Sigmoid colon (tissue), 7 donors: ENCODE measurements at regions of chrX and their contacts with region 1.

Region 1: DNA sequence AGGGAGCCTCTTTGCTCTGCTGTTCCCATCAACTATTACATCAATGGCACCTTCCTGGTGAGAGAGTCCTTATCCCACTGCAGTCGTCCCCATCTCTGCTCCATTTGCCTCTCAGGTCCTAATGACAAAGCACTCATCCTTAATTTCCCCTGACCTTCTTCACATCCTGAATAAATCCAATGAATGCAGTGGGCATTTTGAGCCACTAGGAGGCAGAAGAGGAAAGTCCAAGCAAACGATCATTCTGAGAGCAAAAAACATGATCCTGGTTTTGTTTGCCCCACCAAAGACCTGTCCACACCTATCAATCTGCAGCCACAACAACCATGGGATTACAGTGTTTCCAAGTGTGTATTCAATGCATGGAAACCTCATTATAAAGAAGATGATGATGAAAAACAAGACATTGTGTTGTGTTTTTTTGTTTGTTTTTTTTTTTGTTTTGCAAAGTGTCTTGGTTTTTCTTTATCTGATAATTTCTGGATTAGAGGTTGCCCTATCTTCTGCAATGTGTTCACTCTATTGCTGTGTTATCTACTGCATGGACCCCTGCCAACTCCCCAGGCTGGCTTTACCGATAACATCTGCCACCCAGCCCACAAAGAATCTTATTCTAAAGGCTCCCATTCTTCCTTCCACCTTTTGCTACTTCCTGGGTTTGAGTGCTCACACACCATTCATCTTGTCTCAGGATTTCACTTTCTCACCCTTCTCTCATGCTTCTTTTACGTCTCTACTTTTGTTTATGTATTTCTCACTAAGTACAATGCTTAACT is 207.2 kb downstream of the NLGN4X start:
- DNase-seq: no peak
- H3K4me3 ChIP-seq: no peak overlapping the region
- H3K27ac ChIP-seq: no peak overlapping the region
- H3K4me1 ChIP-seq: no peaks in the 10 kb centered on the region
- H3K27me3 ChIP-seq: no peaks in the 10 kb centered on the region
- CTCF ChIP-seq: peak in 3 of 4 experiments; percentile 6 to 32 (median 30)
- EP300 ChIP-seq: no peak
- POLR2A ChIP-seq: no peak

Region 2: DNA sequence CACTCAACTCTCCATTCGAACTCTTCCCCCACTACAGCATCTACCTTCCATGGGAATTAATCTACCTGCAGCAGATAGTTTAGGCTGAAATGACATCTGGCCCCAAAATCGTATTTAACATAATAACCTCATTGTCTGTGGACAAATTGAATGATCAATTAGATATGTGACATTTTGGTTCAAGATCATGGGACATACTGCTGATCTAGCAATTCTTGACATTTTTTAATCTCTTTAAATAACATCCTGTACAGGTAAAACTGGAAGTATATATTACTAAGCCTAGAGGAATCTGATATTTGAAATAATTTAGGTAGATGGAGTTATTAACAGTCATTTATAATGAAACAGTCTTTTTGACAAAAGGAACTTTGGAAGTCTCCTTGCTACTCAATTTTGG is 495.3 kb before region 1 on chrX:
- intact Hi-C with region 1: no loop called
- DNase-seq: no peak
- H3K4me3 ChIP-seq: no peak overlapping the region
- H3K27ac ChIP-seq: no peak overlapping the region
- H3K4me1 ChIP-seq: no peaks in the 10 kb centered on the region
- H3K27me3 ChIP-seq: no peaks in the 10 kb centered on the region
- CTCF ChIP-seq: no peak
- EP300 ChIP-seq: no peak
- POLR2A ChIP-seq: no peak

Region 3: GRCh38 chrX:6225911-6226595 is 204.5 kb after region 1 on chrX:
- intact Hi-C with region 1: loop called (anchors 10 kb)
- DNase-seq: no peak
- H3K4me3 ChIP-seq: peak overlapping the region; percentile 21 to 42 (median 36)
- H3K27ac ChIP-seq: peak overlapping the region in 1 of 4 donors; percentile 28
- H3K4me1 ChIP-seq: peaks cover 0 to 19% (median 12%) of the 10 kb centered on the region in 4 donors
- H3K27me3 ChIP-seq: peaks cover 0 to 26% (median 10%) of the 10 kb centered on the region in 3 donors
- CTCF ChIP-seq: no peak
- EP300 ChIP-seq: no peak
- POLR2A ChIP-seq: no peak